ENCODE measurements at regions of chr20 and their contacts with region 1.

Region 1: DNA sequence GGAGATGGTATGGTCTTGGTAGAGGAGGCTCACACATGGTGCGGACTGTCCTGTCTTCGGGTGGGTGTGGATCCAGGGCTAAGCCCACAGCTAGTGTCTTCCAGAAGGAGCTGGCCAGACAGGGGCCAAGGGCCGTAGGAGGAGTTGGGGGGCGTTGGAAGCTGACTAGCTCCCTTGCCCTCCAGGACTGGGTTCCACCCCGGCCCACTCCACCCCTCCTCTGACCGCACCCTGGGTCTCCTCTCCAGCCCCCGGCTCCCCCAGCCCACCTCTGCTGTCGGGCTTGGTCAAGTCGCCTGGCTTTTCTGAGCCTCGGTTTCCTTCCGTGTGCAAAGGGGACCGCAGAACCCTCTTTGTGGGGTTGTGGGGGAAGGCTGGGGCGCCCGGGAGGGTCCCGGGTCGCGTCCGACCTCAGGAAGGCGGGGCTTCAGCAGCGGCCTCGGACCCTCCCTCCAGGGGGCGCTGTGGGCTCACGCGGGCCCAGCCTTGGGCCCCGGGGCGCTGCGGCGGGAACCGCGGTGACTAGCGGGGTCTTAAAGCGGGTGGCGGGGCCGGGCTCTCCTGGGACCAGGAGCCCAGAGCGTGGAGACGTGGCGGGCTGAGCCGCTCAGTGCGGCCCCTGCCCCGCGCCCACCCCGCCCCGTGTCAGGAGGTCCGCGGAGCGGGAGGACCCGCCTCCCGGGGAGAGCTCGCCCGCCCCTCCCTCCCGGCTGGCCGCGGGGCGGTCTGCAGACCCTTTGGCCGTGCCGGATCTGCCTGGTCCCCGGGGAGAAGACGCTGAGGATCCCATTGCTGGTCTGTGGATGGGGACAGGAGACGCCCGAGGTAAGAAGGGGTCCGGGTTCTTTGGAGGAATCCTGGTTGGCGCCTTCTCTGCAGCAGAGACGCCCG is 5.4 kb downstream of the NPBWR2 start:
- DNase-seq: peak in 1 of 2 experiments; percentile 94
- H3K4me3 ChIP-seq: peak overlapping the region; percentile 37 to 71 (median 52)
- H3K27ac ChIP-seq: no peak overlapping the region
- H3K4me1 ChIP-seq: peaks cover 0 to 8% (median 3%) of the 10 kb centered on the region in 4 experiments; a peak in 3 of 7 replicates
- H3K27me3 ChIP-seq: peaks cover 2 to 26% (median 21%) of the 10 kb centered on the region in 4 experiments
- CTCF ChIP-seq: peak; percentile 71 to 87 (median 78)
- EP300 ChIP-seq: no peak
- POLR2A ChIP-seq: no peak
- RAD21 ChIP-seq: peak; percentile 60 to 76

Region 2: GRCh38 chr20:63917811-63918210 is 184.2 kb before region 1 on chr20:
- CTCF ChIA-PET with region 1: no interaction called
- POLR2A ChIA-PET with region 1: no interaction called
- DNase-seq: no peak
- H3K4me3 ChIP-seq: no peak overlapping the region
- H3K27ac ChIP-seq: no peak overlapping the region
- H3K4me1 ChIP-seq: no peaks in the 10 kb centered on the region; a peak in 2 of 7 replicates
- H3K27me3 ChIP-seq: no peaks in the 10 kb centered on the region
- CTCF ChIP-seq: no peak
- EP300 ChIP-seq: no peak
- POLR2A ChIP-seq: no peak
- RAD21 ChIP-seq: no peak

Region 3: DNA sequence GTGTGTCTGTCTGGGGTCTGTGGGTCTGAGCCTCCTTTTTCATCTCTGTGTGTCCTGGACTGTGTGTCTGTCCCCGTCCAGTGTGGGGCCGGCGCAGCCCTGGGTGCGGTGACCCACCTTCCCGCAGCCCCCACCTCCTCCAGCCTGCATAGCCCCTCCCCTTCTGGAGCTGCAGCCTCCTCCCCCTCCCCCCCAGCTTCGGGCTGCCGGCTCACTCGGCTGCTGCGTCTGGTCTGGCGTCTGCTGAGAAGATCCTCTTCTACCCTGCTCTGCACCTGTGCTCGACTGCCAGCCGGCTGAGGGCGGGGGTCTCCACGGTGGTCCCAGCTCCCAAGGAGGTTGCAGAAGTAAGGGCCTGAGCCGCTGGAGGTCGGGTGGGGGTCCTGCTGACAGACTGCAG is 10.2 kb before region 1 on chr20:
- CTCF ChIA-PET with region 1: interaction called, 41 read pairs
- POLR2A ChIA-PET with region 1: no interaction called
- DNase-seq: no peak
- H3K4me3 ChIP-seq: no peak overlapping the region
- H3K27ac ChIP-seq: no peak overlapping the region
- H3K4me1 ChIP-seq: peaks cover 0 to 7% (median 2%) of the 10 kb centered on the region in 4 experiments; a peak in 3 of 7 replicates
- H3K27me3 ChIP-seq: peaks cover 0 to 2% (median 0%) of the 10 kb centered on the region in 4 experiments; a peak in 1 of 7 replicates
- CTCF ChIP-seq: no peak
- EP300 ChIP-seq: no peak
- POLR2A ChIP-seq: no peak
- RAD21 ChIP-seq: no peak

Region 4: DNA sequence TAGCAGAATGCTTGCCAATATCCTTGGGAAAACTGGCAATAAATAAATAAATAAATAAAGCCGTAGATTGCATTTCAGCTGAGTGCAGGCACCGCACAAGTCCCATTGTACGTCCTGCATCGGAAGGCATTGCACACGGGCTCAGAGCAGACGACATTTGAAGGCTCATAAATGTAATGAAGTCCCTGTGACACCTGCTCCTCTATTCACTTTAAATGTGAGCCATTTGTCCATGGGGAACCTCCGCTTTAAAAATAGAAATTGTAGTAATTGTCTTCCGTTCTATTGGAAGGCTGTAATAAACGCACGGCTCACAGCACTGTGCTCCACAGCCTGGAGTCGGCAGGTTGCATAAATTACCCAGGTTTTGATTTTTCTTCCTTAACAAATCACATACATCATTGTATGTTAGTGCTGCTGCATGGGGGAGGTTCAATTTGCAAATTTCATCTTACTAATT is 94.9 kb after region 1 on chr20:
- CTCF ChIA-PET with region 1: no interaction called
- POLR2A ChIA-PET with region 1: no interaction called
- DNase-seq: no peak
- H3K4me3 ChIP-seq: no peak overlapping the region
- H3K27ac ChIP-seq: no peak overlapping the region
- H3K4me1 ChIP-seq: peaks cover 0 to 9% (median 3%) of the 10 kb centered on the region in 4 experiments; a peak in 4 of 7 replicates
- H3K27me3 ChIP-seq: no peaks in the 10 kb centered on the region
- CTCF ChIP-seq: no peak
- EP300 ChIP-seq: no peak
- POLR2A ChIP-seq: no peak
- RAD21 ChIP-seq: no peak

Region 5: DNA sequence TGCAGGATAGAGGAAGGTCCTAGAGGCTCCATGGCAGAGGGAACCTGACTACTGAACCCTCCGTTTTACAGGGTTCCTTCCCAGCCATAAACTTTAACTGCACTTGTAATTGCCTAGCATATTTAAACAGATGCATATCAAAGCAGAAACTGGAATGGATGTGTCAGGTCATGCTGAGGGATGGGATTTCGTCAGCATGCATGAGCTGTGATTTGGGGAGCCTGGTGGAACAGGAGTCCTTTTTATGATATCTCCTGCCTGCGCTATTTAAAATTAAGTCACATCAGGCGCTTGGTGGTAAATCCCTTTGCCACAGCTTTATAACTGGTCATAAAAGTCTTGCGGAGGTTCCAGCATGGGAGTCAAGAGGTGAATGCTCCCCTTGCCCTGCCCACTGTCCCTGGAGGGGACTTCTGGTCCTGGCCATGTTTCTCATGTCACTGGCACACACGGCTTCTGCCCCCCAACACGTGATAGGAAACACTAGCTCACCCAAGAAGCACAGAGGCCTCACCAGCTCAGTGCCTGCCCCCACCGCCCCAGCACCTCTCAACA is 127.6 kb after region 1 on chr20:
- CTCF ChIA-PET with region 1: no interaction called
- POLR2A ChIA-PET with region 1: no interaction called
- DNase-seq: no peak
- H3K4me3 ChIP-seq: no peak overlapping the region
- H3K27ac ChIP-seq: no peak overlapping the region
- H3K4me1 ChIP-seq: no peaks in the 10 kb centered on the region
- H3K27me3 ChIP-seq: no peaks in the 10 kb centered on the region
- CTCF ChIP-seq: no peak
- EP300 ChIP-seq: no peak
- POLR2A ChIP-seq: no peak
- RAD21 ChIP-seq: no peak